ENCODE measurements at regions of chr1 and their contacts with region 1.

Region 1: DNA sequence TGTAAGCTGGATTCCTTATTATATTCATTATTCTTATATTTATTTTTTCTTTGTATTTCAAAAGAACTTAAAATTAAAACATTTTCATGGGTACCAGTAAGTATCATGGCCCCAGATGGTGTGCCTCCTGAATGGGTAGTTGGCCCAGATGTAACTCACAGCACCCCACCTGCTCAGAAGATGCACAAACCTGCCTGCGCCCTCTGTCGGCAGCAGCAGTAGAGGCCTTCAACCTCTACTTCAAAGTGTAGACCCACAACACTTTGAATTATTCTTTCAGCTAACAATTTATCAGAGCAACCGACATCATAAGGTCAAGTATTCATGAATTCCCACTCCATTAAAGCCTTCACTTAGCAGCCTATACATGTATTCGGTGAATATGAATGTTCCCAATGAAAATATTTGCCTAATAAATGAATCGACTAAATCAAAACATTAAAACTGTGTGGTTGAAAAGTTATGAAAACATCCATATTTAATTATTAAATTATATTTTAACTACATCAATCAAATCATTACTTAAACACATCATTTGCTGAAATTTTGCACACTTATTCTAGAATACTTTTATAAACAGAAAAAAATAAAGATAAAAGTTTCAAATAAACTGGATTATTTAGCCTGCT is 25.4 kb downstream of the PIGM start:
- DNase-seq: peak; percentile 80 to 86
- ATAC-seq: no peak
- H3K4me3 ChIP-seq: no peak overlapping the region
- H3K27ac ChIP-seq: no peak overlapping the region
- H3K4me1 ChIP-seq: no peaks in the 10 kb centered on the region
- H3K27me3 ChIP-seq: no peaks in the 10 kb centered on the region

Region 2: DNA sequence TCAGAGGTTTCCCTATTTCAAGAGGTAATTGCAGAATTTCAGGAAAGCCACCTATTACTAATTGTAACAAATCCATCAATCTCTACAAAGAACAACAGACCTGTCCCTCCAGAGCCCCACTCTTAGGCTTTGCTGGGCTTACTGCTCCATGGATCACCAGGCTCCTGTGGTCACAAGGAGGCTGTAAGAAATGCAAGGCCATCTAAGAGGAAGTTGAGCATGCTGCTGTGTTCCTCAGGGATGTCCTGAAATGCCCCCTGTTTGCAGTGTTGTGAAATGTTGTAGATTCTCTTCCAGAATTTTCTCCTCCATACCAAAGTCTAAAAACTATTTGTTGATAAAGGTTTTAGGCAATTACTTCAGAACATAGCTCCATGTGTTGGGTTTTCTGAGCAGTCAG is 250.0 kb before region 1 on chr1:
- intact Hi-C with region 1: no loop called
- DNase-seq: peak in 1 of 2 donors; percentile 56
- ATAC-seq: no peak
- H3K4me3 ChIP-seq: no peak overlapping the region
- H3K27ac ChIP-seq: no peak overlapping the region
- H3K4me1 ChIP-seq: no peaks in the 10 kb centered on the region
- H3K27me3 ChIP-seq: no peaks in the 10 kb centered on the region

Region 3: DNA sequence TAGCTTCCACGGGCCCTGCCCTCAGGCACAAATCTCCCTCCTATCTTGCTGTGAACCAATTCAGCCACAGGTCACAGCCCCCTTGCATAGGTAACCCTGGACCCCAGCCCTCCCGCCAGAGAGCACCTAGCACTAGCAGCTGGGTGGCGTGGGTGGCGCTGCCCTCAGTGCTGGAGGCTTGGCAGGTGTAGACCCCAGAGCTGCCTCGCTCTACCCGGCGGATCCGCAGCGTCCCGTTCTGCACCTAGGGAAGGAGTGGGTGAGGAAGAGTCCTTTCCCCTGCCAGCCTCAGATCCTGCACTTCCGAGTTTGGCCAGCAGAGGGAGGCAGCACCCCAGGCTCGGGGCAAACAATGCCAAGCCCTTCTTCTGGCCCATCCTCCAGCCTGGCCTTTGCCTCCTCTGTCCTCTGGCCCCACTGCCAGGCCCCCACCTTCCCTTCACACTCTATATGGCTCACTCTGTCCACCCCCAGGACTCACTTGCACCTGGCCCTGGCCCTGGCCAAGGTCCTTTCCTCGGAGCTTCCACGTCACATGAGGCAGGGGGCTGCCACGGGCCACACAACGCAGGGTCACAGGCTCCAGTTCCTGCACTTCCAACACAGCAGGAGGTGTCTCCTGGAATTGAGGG is 70.0 kb before region 1 on chr1:
- intact Hi-C with region 1: loop called (anchors 1 to 5 kb)
- DNase-seq: peak; percentile 86 to 92
- ATAC-seq: peak; percentile 85
- H3K4me3 ChIP-seq: no peak overlapping the region
- H3K27ac ChIP-seq: no peak overlapping the region
- H3K4me1 ChIP-seq: no peaks in the 10 kb centered on the region
- H3K27me3 ChIP-seq: no peaks in the 10 kb centered on the region

Region 4: GRCh38 chr1:159945483-159946241 is 60.8 kb before region 1 on chr1 and contains the start of gene IGSF9:
- intact Hi-C with region 1: loop called (anchors 2 to 5 kb)
- DNase-seq: peak; percentile 86 to 94
- ATAC-seq: peak; percentile 90
- H3K4me3 ChIP-seq: peak within 1 kb of the TSS in 1 of 2 donors; percentile 6
- H3K27ac ChIP-seq: no peak within 1 kb of the TSS
- H3K4me1 ChIP-seq: no peaks in the 10 kb centered on the region
- H3K27me3 ChIP-seq: no peaks in the 10 kb centered on the region
- total RNA-seq, gene IGSF9: 0.30 TPM in 1 of 2 donors, not detected in the other

Measured in aorta (tissue), 5 donors.